H1 (cell line): ENCODE measurements at regions of chr11 and their contacts with region 1.

Region 1: DNA sequence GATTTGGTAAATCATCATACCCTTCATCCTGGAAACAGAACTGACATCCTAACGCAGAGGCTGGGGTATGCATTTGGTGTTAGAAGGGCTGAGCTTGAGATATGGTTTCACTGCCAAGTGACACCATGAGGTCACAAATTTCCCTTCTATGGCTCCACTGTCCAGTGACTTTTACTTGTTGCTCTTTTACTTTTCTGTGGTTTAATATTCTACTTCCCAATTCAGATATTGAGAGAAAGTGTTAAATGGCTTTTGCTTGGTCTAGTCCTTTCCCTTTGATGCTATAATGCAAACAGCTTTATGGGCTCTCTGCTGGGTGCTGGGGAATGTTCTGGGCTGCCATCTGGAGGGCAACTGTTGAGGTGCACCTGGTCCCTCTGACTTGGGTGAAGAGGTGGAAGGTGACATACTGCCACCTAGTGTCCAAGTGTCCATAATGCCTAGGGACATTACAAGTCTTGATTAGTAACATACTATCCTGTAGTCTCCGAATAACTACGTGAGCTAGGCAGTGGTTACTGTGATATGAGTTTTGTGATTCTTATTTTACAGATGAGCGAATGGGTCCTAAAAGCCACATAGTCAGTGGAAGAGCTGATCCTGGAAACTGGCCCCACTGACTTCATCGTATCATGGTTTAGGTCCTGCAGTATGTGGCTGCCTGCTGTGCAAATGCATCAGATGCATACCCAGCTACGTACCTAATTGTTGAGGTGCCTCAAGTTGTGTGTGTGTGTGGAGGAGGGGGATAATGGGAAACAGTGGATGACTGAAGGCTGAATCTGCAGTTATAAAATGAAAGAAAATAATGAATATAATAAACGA is 149.1 kb upstream of the RAG2 start:
- DNase-seq: peak; percentile 73 to 92
- H3K4me3 ChIP-seq: no peak overlapping the region
- H3K27ac ChIP-seq: no peak overlapping the region
- H3K4me1 ChIP-seq: peaks cover 0 to 8% (median 2%) of the 10 kb centered on the region in 4 experiments; a peak in 3 of 7 replicates
- H3K27me3 ChIP-seq: no peaks in the 10 kb centered on the region; a peak in 1 of 7 replicates
- CTCF ChIP-seq: peak; percentile 95 to 100 (median 100)
- EP300 ChIP-seq: no peak
- POLR2A ChIP-seq: no peak
- RAD21 ChIP-seq: peak; percentile 95 to 98

Region 2: DNA sequence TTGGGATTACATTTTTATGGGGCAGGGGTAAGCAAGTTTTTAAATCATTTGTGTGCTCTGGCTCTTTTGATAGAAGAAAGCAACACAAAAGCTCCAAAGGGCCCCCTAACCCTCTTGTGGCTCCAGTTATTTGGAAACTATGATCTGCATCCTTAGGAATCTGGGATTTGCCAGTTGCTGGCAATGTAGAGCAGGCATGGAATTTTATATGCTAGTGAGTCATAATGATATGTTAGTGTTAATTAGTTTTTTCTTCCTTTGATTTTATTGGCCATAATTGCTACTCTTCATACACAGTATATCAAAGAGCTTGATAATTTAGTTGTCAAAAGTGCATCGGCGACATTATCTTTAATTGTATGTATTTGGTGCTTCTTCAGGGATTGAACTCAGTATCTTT is 169.2 kb before region 1 on chr11:
- CTCF ChIA-PET with region 1: interaction called, 32 read pairs
- POLR2A ChIA-PET with region 1: no interaction called
- DNase-seq: no peak
- H3K4me3 ChIP-seq: no peak overlapping the region
- H3K27ac ChIP-seq: no peak overlapping the region
- H3K4me1 ChIP-seq: no peaks in the 10 kb centered on the region
- H3K27me3 ChIP-seq: no peaks in the 10 kb centered on the region
- CTCF ChIP-seq: no peak
- EP300 ChIP-seq: no peak
- POLR2A ChIP-seq: no peak
- RAD21 ChIP-seq: no peak

Region 3: GRCh38 chr11:36693139-36693843 is 53.8 kb before region 1 on chr11:
- CTCF ChIA-PET with region 1: interaction called, 364 read pairs
- POLR2A ChIA-PET with region 1: no interaction called
- DNase-seq: no peak
- H3K4me3 ChIP-seq: no peak overlapping the region
- H3K27ac ChIP-seq: no peak overlapping the region
- H3K4me1 ChIP-seq: no peaks in the 10 kb centered on the region
- H3K27me3 ChIP-seq: no peaks in the 10 kb centered on the region; a peak in 1 of 7 replicates
- CTCF ChIP-seq: no peak
- EP300 ChIP-seq: no peak
- POLR2A ChIP-seq: no peak
- RAD21 ChIP-seq: no peak

Region 4: GRCh38 chr11:36711106-36711825 is 35.8 kb before region 1 on chr11:
- CTCF ChIA-PET with region 1: interaction called, 201 read pairs
- POLR2A ChIA-PET with region 1: no interaction called
- DNase-seq: no peak
- H3K4me3 ChIP-seq: no peak overlapping the region
- H3K27ac ChIP-seq: no peak overlapping the region
- H3K4me1 ChIP-seq: no peaks in the 10 kb centered on the region
- H3K27me3 ChIP-seq: peaks cover 0 to 2% (median 0%) of the 10 kb centered on the region in 4 experiments; a peak in 1 of 7 replicates
- CTCF ChIP-seq: peak; percentile 13 to 50 (median 21); a peak in 3 of 4 replicates
- EP300 ChIP-seq: no peak
- POLR2A ChIP-seq: no peak
- RAD21 ChIP-seq: 0 out of 4 replicates have a peak, but pooled peaks of 1 of the 2 experiments have one; percentile 4

Region 5: DNA sequence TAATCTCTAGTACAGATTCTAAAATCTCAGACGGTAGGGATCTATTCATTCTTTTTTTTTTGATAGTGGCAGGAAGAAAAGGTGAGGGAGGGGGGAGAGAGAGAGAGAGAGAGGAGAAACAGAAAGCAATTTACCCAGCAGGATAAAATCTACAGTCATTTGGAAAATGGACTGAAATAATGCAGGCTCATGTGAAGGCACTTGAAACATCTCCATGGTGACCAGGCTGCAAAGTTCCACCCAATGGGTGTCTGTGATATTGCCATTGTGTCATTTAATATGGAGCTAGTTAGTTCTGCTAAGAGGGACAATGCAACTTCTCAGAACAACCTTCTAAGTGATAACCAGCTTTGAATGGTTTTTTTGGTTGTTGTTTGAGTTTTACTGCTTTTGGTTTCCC is 16.1 kb after region 1 on chr11:
- CTCF ChIA-PET with region 1: interaction called, 21 read pairs
- POLR2A ChIA-PET with region 1: no interaction called
- DNase-seq: no peak
- H3K4me3 ChIP-seq: no peak overlapping the region
- H3K27ac ChIP-seq: no peak overlapping the region
- H3K4me1 ChIP-seq: no peaks in the 10 kb centered on the region
- H3K27me3 ChIP-seq: no peaks in the 10 kb centered on the region
- CTCF ChIP-seq: no peak
- EP300 ChIP-seq: no peak
- POLR2A ChIP-seq: no peak
- RAD21 ChIP-seq: no peak

Region 6: GRCh38 chr11:36792996-36793914 is 46.2 kb after region 1 on chr11:
- CTCF ChIA-PET with region 1: interaction called, 17 read pairs
- POLR2A ChIA-PET with region 1: no interaction called
- DNase-seq: peak in 1 of 2 experiments; percentile 47
- H3K4me3 ChIP-seq: peak overlapping the region in 3 of 4 experiments; percentile 11 to 27 (median 19); a peak in 3 of 8 replicates
- H3K27ac ChIP-seq: no peak overlapping the region
- H3K4me1 ChIP-seq: peaks cover 0 to 6% (median 4%) of the 10 kb centered on the region in 4 experiments; a peak in 3 of 7 replicates
- H3K27me3 ChIP-seq: no peaks in the 10 kb centered on the region
- CTCF ChIP-seq: peak in 2 of 3 experiments; percentile 40 to 47; a peak in 2 of 4 replicates
- EP300 ChIP-seq: no peak
- POLR2A ChIP-seq: no peak
- RAD21 ChIP-seq: peak; percentile 39 to 51

Region 7: DNA sequence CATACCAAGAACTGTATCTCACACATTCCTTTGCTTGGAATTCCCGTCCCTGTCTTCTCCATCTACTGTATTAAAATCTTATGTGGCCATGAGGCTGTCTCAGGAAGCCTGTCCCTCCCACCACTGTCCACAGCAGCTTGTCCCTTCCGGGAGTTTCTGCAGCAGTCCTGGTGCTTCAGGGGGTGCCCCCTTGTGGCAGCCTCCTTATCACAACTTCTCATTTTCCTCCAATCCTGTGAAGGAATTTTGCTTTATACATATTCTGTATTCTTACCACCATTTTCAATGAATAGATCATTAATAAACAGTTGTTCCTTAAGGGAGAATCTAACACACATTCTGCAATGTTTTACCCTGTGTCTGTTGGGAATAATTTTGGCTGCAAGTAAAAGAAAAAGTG is 71.3 kb after region 1 on chr11:
- CTCF ChIA-PET with region 1: interaction called, 22 read pairs
- POLR2A ChIA-PET with region 1: no interaction called
- DNase-seq: peak in 1 of 2 experiments; percentile 76
- H3K4me3 ChIP-seq: no peak overlapping the region
- H3K27ac ChIP-seq: no peak overlapping the region
- H3K4me1 ChIP-seq: no peaks in the 10 kb centered on the region
- H3K27me3 ChIP-seq: no peaks in the 10 kb centered on the region
- CTCF ChIP-seq: peak; percentile 62 to 69 (median 64)
- EP300 ChIP-seq: no peak
- POLR2A ChIP-seq: no peak
- RAD21 ChIP-seq: peak; percentile 43 to 58